ENCODE measurements at regions of chr5 and their contacts with region 1.

Region 1: GRCh38 chr5:39570403-39571027 is 145.7 kb upstream of the DAB2 start:
- DNase-seq: peak in 1 of 42 donors; percentile 8

Region 2: GRCh38 chr5:39217365-39218281 is 352.9 kb before region 1 on chr5:
- intact Hi-C with region 1: loop called (anchors 10 kb)
- DNase-seq: peak; percentile 35 to 88 (median 72)

Region 3: DNA sequence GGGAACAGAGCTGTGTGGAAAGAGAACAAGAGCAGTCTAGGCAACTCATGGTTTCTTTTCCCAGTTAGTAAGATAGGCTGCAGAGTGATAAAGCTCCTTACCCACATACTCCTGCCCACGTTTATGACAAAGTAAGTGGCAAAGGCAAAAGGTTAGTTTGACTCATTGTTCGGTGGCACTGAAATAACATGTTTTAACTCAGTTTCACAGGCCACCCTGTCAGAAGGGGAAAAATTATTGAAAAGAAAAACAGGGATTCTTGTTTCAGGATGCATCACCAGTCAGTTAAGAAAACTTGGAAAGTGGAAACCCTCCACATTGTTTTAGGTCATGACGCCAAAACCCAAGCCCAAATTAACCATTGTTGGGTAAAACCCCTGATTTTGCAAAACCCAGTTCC is 123.5 kb before region 1 on chr5:
- intact Hi-C with region 1: no loop called
- DNase-seq: no peak

Region 4: DNA sequence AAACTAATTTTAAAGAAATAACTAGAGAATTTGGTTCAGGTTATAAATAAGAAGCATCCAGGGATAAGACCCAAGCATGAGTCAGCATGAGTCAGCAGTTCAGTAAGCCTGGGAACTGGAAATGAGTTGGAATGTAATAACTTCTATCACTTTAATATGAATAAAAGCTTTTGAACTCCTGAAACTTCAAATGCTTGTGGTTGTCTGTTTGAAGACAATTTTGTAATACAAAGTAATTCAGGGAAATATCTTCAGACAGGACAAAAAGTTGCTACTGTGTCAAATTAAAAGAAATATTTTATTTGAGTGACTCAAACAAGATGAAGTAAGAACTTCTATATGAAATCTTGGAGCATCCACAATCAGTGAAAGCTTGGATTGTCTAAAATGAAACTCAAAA is 185.5 kb after region 1 on chr5:
- intact Hi-C with region 1: no loop called
- DNase-seq: peak in 27 of 42 donors; percentile 5 to 73 (median 47)

Measured in head of caudate nucleus (tissue), 42 donors.